ENCODE measurements at regions of chr22 and their contacts with region 1.

Region 1: DNA sequence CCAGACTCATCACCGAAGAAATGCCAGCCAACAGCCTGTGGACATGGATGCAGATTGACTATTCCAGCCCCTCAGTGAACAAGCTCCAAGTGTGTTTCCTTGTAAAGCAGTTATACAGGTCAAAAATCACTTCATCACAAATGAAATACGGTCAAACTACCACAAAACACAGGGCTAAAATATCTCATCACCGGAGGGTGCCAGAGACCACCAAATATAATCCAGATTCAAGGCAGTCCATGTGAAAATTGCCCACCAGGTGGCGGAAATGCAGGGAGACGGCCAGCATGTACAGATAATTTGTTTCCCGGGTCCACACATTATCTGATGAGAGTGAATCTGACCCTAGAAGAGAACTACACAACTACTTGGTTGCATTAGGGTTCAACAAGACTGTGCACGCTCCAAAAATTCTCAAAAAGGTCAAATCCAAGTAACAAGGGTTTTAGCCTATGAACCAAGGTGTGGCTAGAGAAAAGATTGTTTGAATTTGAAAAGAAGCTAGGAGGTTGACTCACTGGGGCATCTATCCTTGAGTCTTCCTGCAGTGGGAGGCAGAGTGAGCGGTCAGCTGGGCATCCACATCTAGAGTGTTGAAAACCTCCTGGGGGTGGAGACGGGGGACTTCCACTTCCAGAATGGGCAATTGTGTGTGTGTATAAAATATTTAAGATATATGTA is 71.7 kb downstream of the IGLL5 start:
- DNase-seq: peak; percentile 86 to 90 (median 86)
- H3K4me3 ChIP-seq: no peak overlapping the region
- H3K27ac ChIP-seq: no peak overlapping the region
- H3K4me1 ChIP-seq: peaks cover 4 to 9% (median 8%) of the 10 kb centered on the region in 4 experiments
- H3K27me3 ChIP-seq: peaks cover 0 to 5% (median 0%) of the 10 kb centered on the region in 5 experiments

Region 2: GRCh38 chr22:22802339-22802970 is 156.8 kb before region 1 on chr22:
- CTCF ChIA-PET with region 1: interaction called, 13 read pairs
- POLR2A ChIA-PET with region 1: no interaction called
- DNase-seq: peak; percentile 48 to 72 (median 65)
- H3K4me3 ChIP-seq: no peak overlapping the region
- H3K27ac ChIP-seq: no peak overlapping the region
- H3K4me1 ChIP-seq: peaks cover 0 to 3% (median 0%) of the 10 kb centered on the region in 4 experiments
- H3K27me3 ChIP-seq: peaks cover 0 to 5% (median 0%) of the 10 kb centered on the region in 5 experiments

Region 3: GRCh38 chr22:22855617-22856308 is 103.5 kb before region 1 on chr22:
- CTCF ChIA-PET with region 1: interaction called, 61 read pairs
- POLR2A ChIA-PET with region 1: no interaction called
- DNase-seq: peak; percentile 40 to 70 (median 58)
- H3K4me3 ChIP-seq: no peak overlapping the region
- H3K27ac ChIP-seq: no peak overlapping the region
- H3K4me1 ChIP-seq: no peaks in the 10 kb centered on the region
- H3K27me3 ChIP-seq: peaks cover 0 to 11% (median 5%) of the 10 kb centered on the region in 5 experiments

Region 4: GRCh38 chr22:22942511-22943329 is 16.6 kb before region 1 on chr22:
- CTCF ChIA-PET with region 1: interaction called, 107 read pairs
- POLR2A ChIA-PET with region 1: no interaction called
- DNase-seq: peak; percentile 81 to 89 (median 86)
- H3K4me3 ChIP-seq: no peak overlapping the region
- H3K27ac ChIP-seq: no peak overlapping the region
- H3K4me1 ChIP-seq: peaks cover 0 to 3% (median 0%) of the 10 kb centered on the region in 4 experiments
- H3K27me3 ChIP-seq: no peaks in the 10 kb centered on the region

Region 5: DNA sequence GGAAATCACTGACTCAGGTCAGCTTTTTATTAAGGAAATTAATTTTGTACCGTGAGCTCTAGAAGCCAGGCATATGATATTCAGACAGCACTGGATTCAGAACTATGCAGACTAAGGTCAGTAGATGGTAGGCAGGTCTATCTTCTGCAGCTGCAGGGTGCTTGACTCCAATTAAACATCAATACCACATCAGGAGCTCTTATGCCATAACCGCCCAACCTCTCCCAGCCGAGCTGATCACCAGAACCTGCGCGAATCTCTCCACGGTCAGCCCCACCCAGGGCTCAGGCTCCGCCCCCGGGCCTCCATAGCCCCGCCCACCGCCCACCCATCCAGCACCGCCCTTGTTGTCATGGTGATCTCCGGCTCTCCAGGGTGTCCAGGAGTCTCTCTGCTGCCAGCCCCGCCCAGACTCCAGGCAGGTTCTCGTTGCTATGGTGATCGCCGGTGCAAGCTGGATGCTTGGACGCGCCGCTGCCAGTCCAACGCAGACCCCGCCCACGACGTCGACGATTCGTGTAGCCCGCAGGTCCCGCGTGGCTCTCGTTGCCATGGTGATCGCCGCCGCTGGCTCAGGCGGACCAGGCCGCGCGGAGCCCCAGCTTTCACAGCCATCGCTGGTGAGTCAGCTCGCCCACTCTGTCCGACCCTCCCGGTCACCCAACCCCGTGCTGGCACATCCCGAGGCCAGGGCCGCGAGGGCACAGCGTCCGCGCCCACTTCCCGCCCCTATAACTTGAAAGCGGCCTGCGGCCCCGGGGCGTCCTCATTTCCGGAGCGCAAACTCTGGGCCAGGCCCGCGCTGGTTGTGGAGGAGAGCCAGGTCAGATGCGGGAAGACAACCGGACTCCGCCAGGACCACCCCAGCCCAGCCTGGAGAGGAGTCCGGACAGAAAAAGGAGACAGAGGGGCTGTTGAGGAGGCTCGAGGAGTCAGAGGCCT is 185.9 kb after region 1 on chr22 and contains the start of gene RAB36:
- CTCF ChIA-PET with region 1: interaction called, 17 read pairs
- POLR2A ChIA-PET with region 1: no interaction called
- DNase-seq: peak; percentile 93 to 97 (median 94)
- H3K4me3 ChIP-seq: peak within 1 kb of the TSS in 4 of 7 experiments; percentile 20 to 68 (median 56)
- H3K27ac ChIP-seq: no peak within 1 kb of the TSS
- H3K4me1 ChIP-seq: peaks cover 4 to 28% (median 23%) of the 10 kb centered on the region in 4 experiments
- H3K27me3 ChIP-seq: peaks cover 0 to 2% (median 0%) of the 10 kb centered on the region in 5 experiments